H1 (cell line): ENCODE measurements at regions of chr2 and their contacts with region 1.

Region 1: GRCh38 chr2:63841254-63842022 is at the start of gene UGP2:
- DNase-seq: peak; percentile 86 to 88
- H3K4me3 ChIP-seq: peak within 1 kb of the TSS; percentile 94 to 100 (median 97)
- H3K27ac ChIP-seq: peak within 1 kb of the TSS; percentile 93
- H3K4me1 ChIP-seq: peaks cover 0 to 3% (median 1%) of the 10 kb centered on the region in 4 experiments; a peak in 3 of 7 replicates
- H3K27me3 ChIP-seq: no peaks in the 10 kb centered on the region
- CTCF ChIP-seq: peak in 2 of 3 experiments; percentile 14 to 33; a peak in 2 of 4 replicates
- EP300 ChIP-seq: no peak
- POLR2A ChIP-seq: peak; percentile 89 to 96
- RAD21 ChIP-seq: peak in 1 of 2 experiments; percentile 11; a peak in 2 of 4 replicates
- total RNA-seq, gene UGP2: 925 and 956 TPM in 2 replicates

Region 2: DNA sequence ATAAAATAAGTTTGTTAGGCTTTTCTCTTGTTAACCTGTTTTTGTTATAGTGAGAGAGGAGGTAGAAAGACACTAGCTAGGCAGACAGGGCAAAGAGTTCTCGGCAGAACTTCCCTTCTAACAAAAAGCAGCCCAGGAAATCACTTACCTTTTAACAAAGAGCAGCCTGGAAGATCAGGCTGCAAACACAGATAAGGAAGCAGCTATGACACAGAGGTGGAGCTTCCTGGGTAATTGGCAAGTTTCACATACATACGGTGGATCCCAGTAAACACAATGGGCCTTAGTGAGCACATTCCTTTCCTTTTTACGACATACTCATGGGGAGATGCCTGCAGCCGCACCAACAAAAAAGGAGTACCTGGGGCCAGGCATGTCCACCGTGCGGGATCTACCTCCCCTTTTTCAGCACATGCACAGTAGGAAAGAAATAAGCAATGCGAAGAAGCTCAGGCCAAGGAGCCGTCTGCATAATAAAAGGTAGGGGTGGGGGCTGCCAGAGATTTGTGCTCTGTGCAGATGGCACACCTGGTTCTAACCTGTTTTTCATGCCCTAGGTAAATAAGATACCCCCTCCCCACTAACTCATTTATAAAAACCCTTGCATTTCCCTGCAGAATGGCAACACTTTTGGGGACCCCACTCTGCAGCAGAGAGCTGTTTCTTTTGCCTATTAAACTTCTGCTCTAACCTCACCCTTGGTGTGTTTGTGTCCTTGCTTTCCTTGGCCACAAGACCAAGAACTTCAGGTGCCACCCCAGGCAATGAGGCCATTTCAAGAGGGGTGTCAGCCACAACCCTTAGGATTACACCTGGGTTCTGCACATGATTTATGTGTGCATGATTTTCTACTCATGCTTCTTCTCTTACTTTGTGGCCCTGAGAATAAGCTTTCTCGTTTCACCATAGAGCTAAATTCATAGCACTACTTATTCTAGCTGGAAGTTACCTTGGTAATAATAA is 226.2 kb before region 1 on chr2:
- CTCF ChIA-PET with region 1: no interaction called
- POLR2A ChIA-PET with region 1: interaction called, 21 read pairs
- DNase-seq: peak; percentile 57 to 70
- H3K4me3 ChIP-seq: peak overlapping the region; percentile 24 to 58 (median 33); a peak in 7 of 8 replicates
- H3K27ac ChIP-seq: peak overlapping the region; percentile 95
- H3K4me1 ChIP-seq: peaks cover 9 to 40% (median 21%) of the 10 kb centered on the region in 4 experiments
- H3K27me3 ChIP-seq: no peaks in the 10 kb centered on the region
- CTCF ChIP-seq: no peak
- EP300 ChIP-seq: peak in 1 of 2 experiments; percentile 81; a peak in 1 of 3 replicates
- POLR2A ChIP-seq: peak; percentile 13 to 81
- RAD21 ChIP-seq: no peak; a peak in 1 of 4 replicates

Region 3: GRCh38 chr2:63698825-63699548 is 142.5 kb before region 1 on chr2:
- CTCF ChIA-PET with region 1: interaction called, 19 read pairs
- POLR2A ChIA-PET with region 1: interaction called, 28 read pairs
- DNase-seq: peak; percentile 51 to 53
- H3K4me3 ChIP-seq: no peak overlapping the region
- H3K27ac ChIP-seq: no peak overlapping the region
- H3K4me1 ChIP-seq: peaks cover 0 to 6% (median 2%) of the 10 kb centered on the region in 4 experiments; a peak in 3 of 7 replicates
- H3K27me3 ChIP-seq: no peaks in the 10 kb centered on the region
- CTCF ChIP-seq: peak in 2 of 3 experiments; percentile 26 to 81; a peak in 2 of 4 replicates
- EP300 ChIP-seq: no peak
- POLR2A ChIP-seq: no peak
- RAD21 ChIP-seq: peak; percentile 77 to 83

Region 4: DNA sequence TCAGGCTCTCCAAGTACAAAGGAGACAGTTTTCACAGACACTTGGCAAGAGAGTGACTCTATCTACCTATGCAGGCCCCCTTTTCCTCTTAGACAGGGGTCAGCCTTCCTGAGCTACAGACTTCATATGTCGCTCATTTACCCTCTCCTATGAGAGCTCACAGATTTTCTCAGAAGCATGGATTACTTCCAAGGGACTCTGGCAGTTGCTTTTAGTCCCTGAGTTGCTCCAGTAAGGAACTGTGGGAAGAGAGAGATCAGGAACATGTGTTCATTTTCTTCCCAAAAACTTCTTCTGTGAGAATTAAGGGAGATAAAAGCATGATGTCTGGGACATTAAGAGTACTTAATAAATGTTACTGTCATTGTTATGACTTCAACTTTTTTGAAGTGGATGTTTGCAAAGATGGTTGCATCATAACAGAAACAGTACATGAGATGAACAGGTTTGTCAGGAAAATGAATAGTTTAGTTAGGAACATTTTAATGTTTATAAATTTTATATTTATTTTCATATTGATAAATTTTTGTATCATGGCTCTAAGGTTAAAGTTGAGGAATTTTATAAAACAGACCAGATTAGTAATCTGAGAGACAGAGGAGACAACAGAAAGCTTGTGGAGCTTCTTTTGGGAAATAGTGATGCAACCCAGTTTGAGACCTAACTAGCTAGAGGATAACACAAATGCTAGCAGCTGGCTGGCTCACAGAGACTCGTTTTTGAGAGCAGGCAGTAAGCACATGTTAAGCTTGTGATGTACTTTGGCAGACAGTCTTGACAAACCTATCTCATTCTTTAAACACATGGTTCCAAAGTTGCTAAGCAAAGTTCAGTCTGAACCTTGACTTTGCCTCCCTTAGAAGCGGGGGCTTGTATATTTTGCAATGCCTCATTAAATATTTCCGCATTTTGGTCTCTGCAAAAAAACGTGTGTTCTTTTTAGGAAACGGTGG is 21.4 kb before region 1 on chr2:
- CTCF ChIA-PET with region 1: interaction called, 3 read pairs
- POLR2A ChIA-PET with region 1: interaction called, 17 read pairs
- DNase-seq: no peak
- H3K4me3 ChIP-seq: no peak overlapping the region
- H3K27ac ChIP-seq: no peak overlapping the region
- H3K4me1 ChIP-seq: peaks cover 0 to 9% (median 0%) of the 10 kb centered on the region in 4 experiments; a peak in 1 of 7 replicates
- H3K27me3 ChIP-seq: peaks cover 0 to 1% (median 0%) of the 10 kb centered on the region in 4 experiments; a peak in 1 of 7 replicates
- CTCF ChIP-seq: no peak
- EP300 ChIP-seq: no peak
- POLR2A ChIP-seq: no peak
- RAD21 ChIP-seq: no peak

Region 5: GRCh38 chr2:63861220-63861822 is 19.9 kb after region 1 on chr2:
- CTCF ChIA-PET with region 1: interaction called, 9 read pairs
- POLR2A ChIA-PET with region 1: interaction called, 297 read pairs
- DNase-seq: no peak
- H3K4me3 ChIP-seq: no peak overlapping the region
- H3K27ac ChIP-seq: no peak overlapping the region
- H3K4me1 ChIP-seq: peaks cover 0 to 22% (median 6%) of the 10 kb centered on the region in 4 experiments; a peak in 4 of 7 replicates
- H3K27me3 ChIP-seq: no peaks in the 10 kb centered on the region
- CTCF ChIP-seq: peak in 2 of 3 experiments; percentile 37; a peak in 2 of 4 replicates
- EP300 ChIP-seq: no peak
- POLR2A ChIP-seq: no peak
- RAD21 ChIP-seq: peak; percentile 69 to 71